ENCODE measurements at regions of chrX and their contacts with region 1.

Region 1: DNA sequence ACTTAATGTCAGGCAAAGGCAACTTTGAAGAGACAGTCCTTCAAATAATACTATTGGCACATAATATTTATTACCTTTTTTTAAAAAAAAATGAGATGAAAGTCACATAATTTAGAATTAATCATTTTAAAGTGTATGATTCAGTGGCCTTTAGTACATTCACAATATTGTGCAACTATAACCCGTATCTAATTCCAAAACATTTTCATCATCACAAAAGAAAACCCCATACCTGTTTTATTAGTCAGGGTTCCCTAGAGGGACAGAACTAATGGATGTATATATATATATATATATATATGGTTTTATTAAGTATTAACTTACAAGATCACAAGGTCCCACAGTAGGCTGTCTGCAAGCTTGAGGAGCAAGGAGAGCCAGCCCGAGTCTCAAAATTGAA is 94.8 kb upstream of the TEX13A start:
- DNase-seq: no peak

Region 2: DNA sequence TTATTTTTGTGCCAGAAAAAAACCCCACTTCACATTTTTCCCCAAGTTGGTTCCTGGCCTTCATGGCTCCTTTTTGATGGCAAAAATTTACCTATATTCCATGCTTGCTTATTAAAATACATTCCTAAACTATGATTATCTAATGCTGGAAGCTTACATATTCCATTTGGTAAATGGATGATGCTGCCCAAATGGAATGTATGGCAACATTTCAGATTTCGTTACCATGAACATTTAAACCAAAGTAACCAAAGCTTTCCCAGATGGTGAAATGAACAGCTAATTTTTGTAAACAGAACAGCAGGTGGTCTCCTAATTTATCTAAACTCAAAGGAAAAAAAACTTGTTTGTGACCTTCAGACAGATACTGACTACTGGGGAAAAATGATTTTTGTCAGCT is 15.9 kb after region 1 on chrX:
- intact Hi-C with region 1: no loop called
- DNase-seq: no peak

Region 3: DNA sequence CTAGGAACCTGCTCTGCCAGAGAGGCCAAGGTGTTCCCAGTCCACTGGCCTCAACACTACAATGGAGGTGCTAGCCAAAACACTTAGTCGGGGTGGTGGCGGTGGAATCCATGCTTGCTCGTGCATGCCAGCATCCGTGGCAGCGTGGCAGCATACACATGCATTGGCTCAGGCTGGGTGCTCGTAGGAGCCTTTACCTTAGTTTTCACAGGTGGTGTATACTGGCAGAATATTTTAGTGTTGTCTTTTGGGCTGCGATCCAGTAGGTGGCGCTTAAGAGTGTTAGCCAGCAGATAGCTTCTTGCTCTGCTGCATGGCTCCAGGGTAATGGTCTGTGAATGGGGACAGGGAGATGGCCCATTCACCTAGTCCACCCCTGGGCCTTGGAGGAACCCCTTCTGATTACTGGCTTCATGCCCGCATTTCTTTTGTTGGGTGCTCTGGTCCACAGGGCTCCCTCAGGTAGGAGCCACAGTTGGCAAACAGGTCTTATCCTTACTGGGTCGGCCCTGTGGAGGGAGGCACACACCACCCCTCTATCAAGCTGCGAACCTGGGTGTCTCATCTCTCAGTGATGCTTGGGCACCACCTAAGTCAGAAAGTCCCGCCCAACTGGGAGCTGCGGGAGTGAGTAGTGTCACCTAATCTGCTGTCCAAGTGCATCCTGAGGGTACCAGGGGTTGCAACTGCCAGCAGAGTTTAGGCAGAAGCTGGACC is 1547.8 kb after region 1 on chrX:
- intact Hi-C with region 1: loop called in 1 of 2 experiments (anchors 5 kb)
- DNase-seq: no peak